ENCODE measurements at regions of chr6 and their contacts with region 1.

Region 1: DNA sequence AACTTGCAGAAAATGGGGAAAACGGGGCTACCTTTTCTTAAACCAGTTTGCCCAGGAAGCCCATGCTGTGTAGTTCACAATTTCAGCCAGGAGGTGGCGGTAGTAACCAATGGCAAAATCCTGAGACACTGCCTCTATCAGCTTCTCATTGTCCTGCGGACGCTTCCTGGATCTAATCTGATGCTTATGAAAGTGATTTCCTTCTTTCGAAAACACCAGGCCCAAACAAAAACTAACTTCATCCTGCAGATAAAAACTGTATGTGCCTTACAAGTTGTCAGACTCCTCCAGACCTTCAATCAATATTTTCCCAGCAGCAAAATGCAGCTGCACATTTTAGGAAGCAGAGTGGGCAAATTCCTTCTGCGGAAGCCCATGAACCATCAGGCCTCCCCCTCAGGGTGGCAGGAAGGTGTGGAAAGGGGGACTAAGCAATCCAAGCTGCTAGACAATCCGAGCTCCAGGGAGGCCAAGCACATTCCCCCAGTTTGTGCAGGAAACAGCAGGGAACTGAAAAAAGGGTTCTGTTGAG is 88.5 kb downstream of the LY86 start:
- DNase-seq: peak; percentile 88
- H3K4me3 Mint-ChIP-seq: no peak overlapping the region
- H3K27ac Mint-ChIP-seq: no peak overlapping the region
- H3K4me1 Mint-ChIP-seq: peaks cover 23% of the 10 kb centered on the region
- H3K27me3 Mint-ChIP-seq: no peaks in the 10 kb centered on the region
- CTCF ChIP-seq: peak; percentile 92

Region 2: GRCh38 chr6:6074190-6074589 is 602.8 kb before region 1 on chr6:
- CTCF ChIA-PET with region 1: no interaction called
- POLR2A ChIA-PET with region 1: no interaction called
- intact Hi-C with region 1: no loop called
- DNase-seq: no peak
- H3K4me3 Mint-ChIP-seq: no peak overlapping the region
- H3K27ac Mint-ChIP-seq: no peak overlapping the region
- H3K4me1 Mint-ChIP-seq: no peaks in the 10 kb centered on the region
- H3K27me3 Mint-ChIP-seq: peaks cover 56% of the 10 kb centered on the region
- CTCF ChIP-seq: no peak

Region 3: GRCh38 chr6:6696867-6697531 is 20.0 kb after region 1 on chr6:
- CTCF ChIA-PET with region 1: interaction called, 20 read pairs
- POLR2A ChIA-PET with region 1: interaction called, 17 read pairs
- intact Hi-C with region 1: loop called (anchors 1 kb)
- DNase-seq: peak; percentile 82
- H3K4me3 Mint-ChIP-seq: no peak overlapping the region
- H3K27ac Mint-ChIP-seq: peak overlapping the region; percentile 97
- H3K4me1 Mint-ChIP-seq: peaks cover 50% of the 10 kb centered on the region
- H3K27me3 Mint-ChIP-seq: no peaks in the 10 kb centered on the region
- CTCF ChIP-seq: peak; percentile 48

Region 4: GRCh38 chr6:6724539-6725467 is 47.8 kb after region 1 on chr6:
- CTCF ChIA-PET with region 1: interaction called, 22 read pairs
- POLR2A ChIA-PET with region 1: interaction called, 4 read pairs
- intact Hi-C with region 1: loop called (anchors 1 kb)
- DNase-seq: peak; percentile 77
- H3K4me3 Mint-ChIP-seq: peak overlapping the region; percentile 10
- H3K27ac Mint-ChIP-seq: peak overlapping the region; percentile 72
- H3K4me1 Mint-ChIP-seq: peaks cover 6% of the 10 kb centered on the region
- H3K27me3 Mint-ChIP-seq: no peaks in the 10 kb centered on the region
- CTCF ChIP-seq: peak; percentile 82

Region 5: DNA sequence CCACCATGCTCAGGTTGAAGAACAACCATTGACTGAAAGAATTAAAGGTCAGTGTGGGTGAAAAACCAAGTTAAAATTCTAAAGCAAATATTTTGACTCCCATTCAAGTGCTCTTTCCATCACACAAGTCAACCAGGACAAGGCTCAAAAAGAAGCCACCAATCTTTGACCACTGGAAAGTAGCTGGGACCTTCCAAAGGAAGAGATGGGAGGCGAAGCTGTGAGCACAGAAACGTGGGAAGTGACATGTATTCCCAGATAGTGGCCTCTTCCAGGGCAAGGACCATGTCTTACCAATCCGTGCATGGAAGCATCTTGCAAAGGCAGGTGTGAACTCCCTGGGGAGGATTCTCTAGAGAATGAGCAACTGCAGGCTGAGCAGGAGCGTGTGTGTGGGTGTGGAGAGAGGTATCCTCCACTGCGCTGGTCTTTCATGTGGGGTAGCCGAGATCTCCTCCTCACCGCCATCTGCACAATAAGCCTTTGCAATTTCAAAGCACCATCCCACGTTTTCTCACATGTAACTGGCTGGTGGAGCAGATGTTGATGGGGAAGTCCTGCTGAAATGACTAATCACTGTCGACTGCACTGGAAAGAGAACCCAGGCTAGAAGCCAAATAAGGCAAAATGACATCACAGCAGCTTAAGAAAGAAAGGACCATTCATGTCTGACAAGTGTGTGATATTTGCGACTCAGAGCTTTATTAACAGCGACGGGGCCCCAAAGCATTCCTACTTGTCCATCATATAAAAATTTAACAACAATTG is 241.4 kb after region 1 on chr6:
- CTCF ChIA-PET with region 1: interaction called, 8 read pairs
- POLR2A ChIA-PET with region 1: no interaction called
- intact Hi-C with region 1: loop called (anchors 5 kb)
- DNase-seq: peak; percentile 73
- H3K4me3 Mint-ChIP-seq: no peak overlapping the region
- H3K27ac Mint-ChIP-seq: no peak overlapping the region
- H3K4me1 Mint-ChIP-seq: peaks cover 27% of the 10 kb centered on the region
- H3K27me3 Mint-ChIP-seq: no peaks in the 10 kb centered on the region
- CTCF ChIP-seq: no peak

Region 6: DNA sequence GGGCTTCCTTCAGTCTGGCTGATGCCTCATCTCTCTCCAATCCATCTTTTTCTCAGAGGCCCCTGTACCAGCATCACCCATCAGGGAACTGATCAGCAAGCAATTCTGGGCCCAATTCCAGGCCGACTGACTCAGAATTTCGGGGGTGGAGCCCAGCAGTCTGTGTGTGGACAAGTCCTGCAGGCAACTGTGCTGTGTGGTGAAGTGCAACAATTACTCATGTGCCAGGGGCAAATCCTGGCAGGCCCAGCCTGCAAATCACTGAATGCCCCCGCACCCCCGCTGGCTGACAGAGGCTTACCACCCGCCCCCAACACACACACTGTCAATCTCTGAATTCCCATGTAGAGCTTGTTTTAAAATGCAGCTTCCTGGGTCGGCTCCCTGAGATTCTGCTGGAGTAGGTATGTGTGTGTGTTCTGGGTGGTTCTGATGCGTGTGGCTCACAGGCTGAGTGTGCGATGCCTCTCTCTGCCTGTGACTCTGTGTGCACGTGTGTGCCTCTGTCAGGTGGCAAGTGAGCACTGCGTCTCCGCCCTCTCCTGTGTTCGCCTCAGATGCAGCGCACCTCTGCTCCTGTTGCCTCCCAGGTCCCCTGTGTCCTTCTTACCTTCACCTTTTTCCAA is 590.6 kb after region 1 on chr6:
- CTCF ChIA-PET with region 1: interaction called, 6 read pairs
- POLR2A ChIA-PET with region 1: no interaction called
- intact Hi-C with region 1: loop called (anchors 5 kb)
- DNase-seq: peak; percentile 99
- H3K4me3 Mint-ChIP-seq: peak overlapping the region; percentile 60
- H3K27ac Mint-ChIP-seq: peak overlapping the region; percentile 41
- H3K4me1 Mint-ChIP-seq: peaks cover 21% of the 10 kb centered on the region
- H3K27me3 Mint-ChIP-seq: no peaks in the 10 kb centered on the region
- CTCF ChIP-seq: no peak

Measured in MCF 10A (cell line).